Activated T-helper 2 cell treated with anti-CD3 and anti-CD28 coated beads, Interferon-gamma antibody, Interleukin-2, Interleukin-4, amounts not matched to agents 10 μg/mL and 5 μg/mL and 100 μg/mL, durations not matched to agents 14 hours and 24 hours and 36 hours (primary cell): ENCODE measurements at regions of chr17 and their contacts with region 1.

Region 1: DNA sequence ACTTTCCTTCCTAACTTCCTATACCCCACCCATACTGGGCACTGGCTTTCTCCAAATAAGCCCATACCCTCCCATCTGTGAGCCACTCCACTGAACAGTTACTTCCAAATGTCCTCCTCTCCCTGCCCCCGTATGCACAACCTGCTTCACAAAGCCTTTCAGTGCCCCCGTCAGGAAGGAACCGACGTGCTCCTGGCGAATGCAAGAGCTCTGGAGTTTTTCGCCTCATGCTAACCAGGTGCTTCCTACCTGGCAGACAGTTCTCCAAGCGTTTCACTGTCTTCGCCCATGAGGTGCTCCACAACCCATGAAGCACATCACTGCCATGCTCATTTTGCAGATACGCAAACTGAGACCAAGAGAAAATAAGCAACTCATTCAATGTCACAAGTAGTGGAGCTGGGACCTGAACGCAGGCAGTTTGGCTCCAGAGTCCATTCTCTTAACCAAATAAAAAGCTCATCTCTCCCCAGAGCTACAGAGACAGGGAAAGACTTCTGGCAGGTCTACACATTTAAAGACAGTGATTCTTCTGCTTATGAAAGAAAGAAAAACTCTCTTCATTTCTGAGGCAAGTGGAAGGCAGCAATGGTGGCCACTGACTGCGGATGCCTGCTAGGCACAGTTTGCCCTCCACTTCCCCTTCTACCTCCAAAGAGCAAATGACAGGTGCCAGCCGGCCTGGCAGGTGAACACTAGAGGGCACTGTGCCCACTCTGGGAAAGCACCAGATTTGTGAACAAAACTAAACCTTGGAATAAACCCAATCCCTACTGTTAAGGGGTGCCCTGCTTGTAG is 23.8 kb downstream of the SPHK1 start:
- DNase-seq: peak; percentile 52
- H3K4me3 Mint-ChIP-seq: no peak overlapping the region
- H3K27ac Mint-ChIP-seq: no peak overlapping the region
- H3K4me1 Mint-ChIP-seq: peaks cover 6% of the 10 kb centered on the region
- H3K27me3 Mint-ChIP-seq: no peaks in the 10 kb centered on the region

Region 2: DNA sequence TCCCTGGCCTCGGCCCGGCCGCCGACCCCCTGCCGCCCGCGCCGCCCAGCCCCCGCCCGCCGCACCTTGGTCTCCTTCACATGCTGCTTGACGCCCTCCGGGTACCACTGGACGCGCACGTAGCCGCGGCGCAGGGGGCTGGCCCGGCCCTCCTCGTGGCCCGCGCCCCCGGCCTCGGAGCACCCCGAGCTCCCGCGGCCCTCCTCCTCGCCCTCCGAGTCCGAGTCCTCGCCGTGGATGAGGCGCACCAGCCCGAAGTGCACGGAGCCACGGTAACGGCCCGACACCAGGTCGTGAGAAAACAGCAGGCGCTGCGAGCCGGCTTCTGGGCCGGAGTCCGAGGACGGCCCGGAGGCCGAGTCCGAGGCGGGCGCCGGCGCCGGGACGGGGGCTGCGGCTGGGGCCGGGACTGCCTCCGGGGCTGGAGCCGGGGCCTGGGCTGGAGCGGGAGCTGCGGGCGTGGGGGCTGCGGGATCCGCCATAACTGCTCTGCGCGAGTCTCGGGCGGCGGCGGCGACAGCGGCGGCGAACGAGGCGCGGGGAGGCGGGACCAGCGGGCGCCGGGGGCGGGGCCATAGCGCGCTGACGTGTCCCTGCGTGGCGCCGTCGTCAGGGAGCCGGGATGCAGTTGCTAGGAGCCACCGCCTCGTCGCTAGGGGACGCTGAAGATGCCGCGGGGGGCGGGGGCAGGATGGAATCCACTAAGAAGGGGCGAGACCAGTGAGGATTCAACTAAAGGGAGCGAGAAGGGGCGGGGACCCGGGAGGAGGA is 44.6 kb after region 1 on chr17 and contains the start of gene UBE2O:
- intact Hi-C with region 1: loop called (anchors 5 kb)
- DNase-seq: peak; percentile 93
- H3K4me3 Mint-ChIP-seq: peak within 1 kb of the TSS; percentile 85
- H3K27ac Mint-ChIP-seq: peak within 1 kb of the TSS; percentile 47
- H3K4me1 Mint-ChIP-seq: peaks cover 31% of the 10 kb centered on the region
- H3K27me3 Mint-ChIP-seq: peaks cover 4% of the 10 kb centered on the region
- total RNA-seq, gene UBE2O: 46.0 and 46.5 TPM in 2 replicates

Region 3: DNA sequence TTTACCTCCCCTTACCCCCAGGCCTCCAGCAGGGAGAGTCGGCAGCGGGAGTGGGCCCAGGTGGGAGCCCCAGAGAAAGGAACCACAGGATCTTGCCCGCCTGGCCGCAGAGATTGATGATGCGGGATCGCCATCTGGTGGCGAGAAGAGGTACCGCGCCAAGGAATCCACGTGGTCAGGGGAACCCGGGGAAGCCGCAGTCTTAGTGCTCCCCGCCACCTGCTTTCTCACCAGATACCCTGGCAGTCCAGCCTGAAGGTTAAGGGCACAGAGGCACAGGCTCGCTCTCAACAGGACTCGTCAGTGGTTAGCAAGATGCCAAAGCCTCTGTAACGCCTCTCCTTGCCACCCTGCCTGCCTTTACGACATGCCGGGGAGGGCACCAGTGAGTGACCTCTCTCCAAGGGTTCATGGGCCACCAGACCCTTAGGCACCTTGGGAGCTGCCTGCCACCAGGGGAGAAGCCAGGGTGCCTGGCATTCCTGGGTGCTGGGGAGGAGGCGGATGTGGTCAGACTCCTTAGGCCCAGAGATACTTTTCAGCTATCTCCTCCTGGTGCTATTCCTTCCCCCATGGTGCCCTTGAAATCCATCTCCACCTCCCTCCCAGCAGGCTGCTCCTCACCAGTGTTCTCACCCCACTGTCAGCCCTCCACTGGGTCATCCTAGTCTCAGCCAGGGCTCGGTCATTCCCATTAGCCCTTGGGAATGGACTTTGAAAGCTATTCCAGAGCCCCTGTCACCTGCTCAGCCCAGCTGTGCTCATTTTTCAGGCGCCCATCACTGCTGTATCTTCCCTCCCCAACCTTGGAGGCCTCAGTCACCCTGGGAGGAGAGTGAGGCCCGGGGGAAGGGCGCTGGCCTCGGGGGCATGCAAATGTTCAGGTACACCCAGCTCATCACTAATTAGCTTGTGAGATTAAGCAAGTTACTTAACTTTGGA is 98.4 kb after region 1 on chr17:
- intact Hi-C with region 1: loop called (anchors 2 kb)
- DNase-seq: peak; percentile 84
- H3K4me3 Mint-ChIP-seq: no peak overlapping the region
- H3K27ac Mint-ChIP-seq: no peak overlapping the region
- H3K4me1 Mint-ChIP-seq: peaks cover 19% of the 10 kb centered on the region
- H3K27me3 Mint-ChIP-seq: peaks cover 7% of the 10 kb centered on the region